ENCODE measurements at regions of chr22 and their contacts with region 1.

Region 1: GRCh38 chr22:36528795-36529751 is at the start of gene EIF3D:
- DNase-seq: peak; percentile 99
- H3K4me3 Mint-ChIP-seq: peak within 1 kb of the TSS; percentile 92
- H3K27ac Mint-ChIP-seq: peak within 1 kb of the TSS; percentile 99
- H3K4me1 Mint-ChIP-seq: peaks cover 16% of the 10 kb centered on the region
- H3K27me3 Mint-ChIP-seq: no peaks in the 10 kb centered on the region
- total RNA-seq, gene EIF3D: 300 and 316 TPM in 2 replicates

Region 2: DNA sequence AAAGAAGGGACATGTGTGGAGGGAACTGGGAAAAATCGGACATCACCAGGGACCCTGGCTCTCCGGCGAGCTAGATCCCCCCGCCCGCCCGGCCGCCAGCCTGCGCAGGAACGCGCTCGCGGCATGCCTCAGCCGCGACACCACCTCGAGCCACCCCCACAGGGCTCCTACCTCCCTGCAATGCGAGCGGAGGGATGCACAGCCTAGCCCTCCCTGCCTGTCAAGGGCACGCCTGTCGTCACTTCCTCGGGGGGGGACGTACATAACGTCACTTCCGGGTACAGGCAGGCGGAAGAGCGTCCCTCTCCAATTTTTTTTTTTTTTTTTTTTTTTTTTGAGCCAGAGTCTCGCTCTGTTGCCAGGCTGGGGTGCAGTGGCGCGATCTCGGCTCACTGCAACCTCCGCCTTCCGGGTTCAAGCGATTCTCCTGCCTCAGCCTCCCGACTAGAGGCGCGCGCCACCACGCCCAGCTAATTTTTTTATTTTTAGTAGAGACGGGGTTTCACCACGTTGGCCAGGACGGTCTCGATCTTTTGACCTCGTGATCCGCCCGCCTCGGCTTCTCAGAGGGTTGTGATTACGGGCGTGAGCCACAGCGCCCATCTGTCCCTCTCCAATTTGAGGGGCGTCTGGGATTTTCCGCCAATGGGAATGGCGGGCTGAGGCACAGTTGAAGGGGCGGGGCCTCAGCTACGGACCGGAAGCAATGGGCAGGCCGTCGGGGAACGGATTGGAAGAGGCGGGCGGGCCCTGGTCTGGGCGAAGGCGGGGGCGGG is 47.5 kb before region 1 on chr22 and contains the start of gene TXN2:
- intact Hi-C with region 1: loop called (anchors 1 kb)
- DNase-seq: peak; percentile 92
- H3K4me3 Mint-ChIP-seq: peak within 1 kb of the TSS; percentile 97
- H3K27ac Mint-ChIP-seq: peak within 1 kb of the TSS; percentile 94
- H3K4me1 Mint-ChIP-seq: peaks cover 12% of the 10 kb centered on the region
- H3K27me3 Mint-ChIP-seq: no peaks in the 10 kb centered on the region
- total RNA-seq, gene TXN2: 94.0 and 95.1 TPM in 2 replicates

Measured in activated T-helper 2 cell treated with anti-CD3 and anti-CD28 coated beads, Interferon-gamma antibody, Interleukin-2, Interleukin-4, amounts not matched to agents 10 μg/mL and 5 μg/mL and 100 μg/mL, durations not matched to agents 14 hours and 24 hours and 36 hours (primary cell).